Sciatic nerve (tissue), 2 donors: ENCODE measurements at regions of chr9 and their contacts with region 1.

Region 1: GRCh38 chr9:95508968-95509850 is 7.6 kb downstream of the PTCH1 start:
- DNase-seq: peak; percentile 90
- ATAC-seq: peak; percentile 83

Region 2: GRCh38 chr9:96057155-96057554 is 547.9 kb after region 1 on chr9:
- intact Hi-C with region 1: loop called (anchors 10 kb)
- DNase-seq: no peak
- ATAC-seq: no peak